ENCODE measurements at regions of chr10 and their contacts with region 1.

Region 1: GRCh38 chr10:878333-878759 is 53.2 kb downstream of the LARP4B start:
- DNase-seq: peak; percentile 43 to 84
- ATAC-seq: peak; percentile 61 to 88 (median 82)
- H3K4me3 ChIP-seq: no peak overlapping the region
- H3K27ac ChIP-seq: peak overlapping the region; percentile 56
- H3K4me1 ChIP-seq: peaks cover 33% of the 10 kb centered on the region
- H3K27me3 ChIP-seq: no peaks in the 10 kb centered on the region
- CTCF ChIP-seq: no peak

Region 2: GRCh38 chr10:659688-660141 is 218.6 kb before region 1 on chr10:
- intact Hi-C with region 1: no loop called
- DNase-seq: no peak
- ATAC-seq: no peak
- H3K4me3 ChIP-seq: no peak overlapping the region
- H3K27ac ChIP-seq: peak overlapping the region; percentile 66
- H3K4me1 ChIP-seq: peaks cover 62% of the 10 kb centered on the region
- H3K27me3 ChIP-seq: no peaks in the 10 kb centered on the region
- CTCF ChIP-seq: no peak

Region 3: DNA sequence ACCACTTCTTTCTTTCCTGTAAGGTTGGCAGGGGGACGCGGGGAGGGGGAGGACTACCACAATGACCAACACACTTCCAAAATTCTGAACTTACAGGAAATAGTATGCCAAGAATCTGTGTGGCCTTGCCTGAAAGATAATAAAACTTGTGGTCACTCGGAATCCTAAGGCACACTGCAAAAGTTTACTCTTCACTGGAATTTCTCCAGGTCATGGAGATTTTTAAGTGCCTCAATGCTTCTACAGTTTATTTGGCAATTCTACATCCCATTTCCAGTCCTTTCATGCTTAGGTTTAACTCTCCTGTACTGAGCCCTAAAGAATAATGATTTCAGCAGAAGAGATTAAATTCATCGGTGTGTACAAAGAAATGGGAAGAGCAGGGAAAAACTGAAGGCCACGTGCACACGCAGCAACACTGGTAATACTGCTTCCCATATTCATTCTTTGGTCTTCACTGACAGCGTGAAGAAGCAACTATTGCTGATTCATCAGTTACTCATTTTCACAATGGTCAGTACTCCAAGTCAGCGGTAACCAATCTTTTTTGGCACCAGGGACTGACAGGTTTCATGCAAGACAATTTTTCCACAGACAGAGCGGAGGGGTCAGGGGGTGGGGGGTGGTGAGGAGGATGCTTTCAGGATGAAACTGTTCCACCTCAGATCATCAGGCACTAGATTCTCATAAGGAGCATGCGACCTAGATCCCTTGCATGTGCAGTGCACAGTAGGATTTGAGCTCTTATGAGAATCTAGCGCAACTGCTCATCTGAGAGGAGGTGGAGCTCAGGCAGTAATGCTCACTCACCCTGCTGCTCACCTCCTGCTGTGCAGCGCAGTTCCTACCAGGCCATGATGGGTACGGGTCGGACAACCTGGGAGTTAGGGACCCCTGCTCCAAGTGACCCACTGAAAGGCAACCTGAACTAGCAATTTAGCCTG is 43.4 kb after region 1 on chr10:
- intact Hi-C with region 1: loop called in 1 of 2 experiments (anchors 5 kb)
- DNase-seq: no peak
- ATAC-seq: peak; percentile 62 to 86 (median 78)
- H3K4me3 ChIP-seq: no peak overlapping the region
- H3K27ac ChIP-seq: peak overlapping the region; percentile 36
- H3K4me1 ChIP-seq: peaks cover 47% of the 10 kb centered on the region
- H3K27me3 ChIP-seq: no peaks in the 10 kb centered on the region
- CTCF ChIP-seq: no peak

Measured in psoas muscle (tissue), 8 donors.